RWPE1 (cell line): ENCODE measurements at regions of chr16 and their contacts with region 1.

Region 1: GRCh38 chr16:57920215-57920879 is 50.6 kb downstream of the CNGB1 start:
- DNase-seq: peak; percentile 37
- H3K27ac ChIP-seq: peak overlapping the region; percentile 84
- CTCF ChIP-seq: no peak

Region 2: DNA sequence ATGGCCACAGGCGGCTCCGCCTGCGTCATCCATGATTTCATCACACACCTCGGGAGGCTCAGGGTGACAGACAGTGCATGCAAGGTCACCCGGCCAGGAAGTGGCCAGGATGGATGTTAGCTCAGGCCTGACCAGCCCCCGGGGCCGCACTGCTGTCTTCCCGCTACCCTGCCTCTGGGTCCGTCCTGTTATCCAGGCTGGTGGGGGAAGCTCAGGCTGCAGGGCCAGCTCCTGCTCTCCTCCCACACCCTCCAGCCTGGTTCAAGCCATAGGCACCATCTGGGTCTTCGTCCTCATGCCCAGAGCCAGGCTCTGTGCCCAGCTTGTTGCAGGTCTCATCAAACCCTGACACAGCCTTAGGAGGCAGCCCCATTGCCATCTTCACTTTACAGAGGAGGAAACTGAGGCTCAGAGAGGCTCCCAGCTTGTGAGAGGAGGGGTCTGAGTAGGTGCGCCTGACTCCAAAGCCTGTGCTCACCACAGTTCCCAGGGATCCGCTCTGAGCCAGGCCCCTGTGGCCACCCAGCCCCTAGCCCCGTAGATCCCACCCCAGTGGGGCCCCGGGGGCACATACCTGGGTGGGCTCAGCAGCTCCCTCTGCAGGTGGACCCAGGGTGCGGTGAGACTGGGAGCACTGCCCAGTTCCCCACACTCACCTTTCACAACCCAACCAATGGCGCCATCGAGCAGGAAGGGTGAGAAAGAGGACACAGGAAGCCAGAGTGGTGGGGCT is 252.7 kb before region 1 on chr16:
- CTCF ChIA-PET with region 1: no interaction called
- POLR2A ChIA-PET with region 1: interaction called, 10 read pairs
- DNase-seq: no peak
- H3K27ac ChIP-seq: no peak overlapping the region
- CTCF ChIP-seq: no peak; the same call in 1 of the 2 replicates